Activated CD8-positive, alpha-beta memory T cell treated with anti-CD3 and anti-CD28 coated beads, Interleukin-2, amount 10 ng/mL, durations not matched to agents 7 days and 5 days (primary cell): ENCODE measurements at regions of chr15 and their contacts with region 1.

Region 1: GRCh38 chr15:74787251-74788041 is 5.6 kb downstream of the CSK start:
- DNase-seq: peak; percentile 99
- ATAC-seq: peak; percentile 67
- H3K4me3 Mint-ChIP-seq: peak overlapping the region; percentile 79
- H3K27ac Mint-ChIP-seq: peak overlapping the region; percentile 98
- H3K4me1 Mint-ChIP-seq: peaks cover 67% of the 10 kb centered on the region
- H3K27me3 Mint-ChIP-seq: no peaks in the 10 kb centered on the region

Region 2: GRCh38 chr15:74799856-74800547 is 12.6 kb after region 1 on chr15:
- CTCF ChIA-PET with region 1: interaction called, 1,355 read pairs
- DNase-seq: peak; percentile 90
- ATAC-seq: peak; percentile 91
- H3K4me3 Mint-ChIP-seq: no peak overlapping the region
- H3K27ac Mint-ChIP-seq: peak overlapping the region; percentile 74
- H3K4me1 Mint-ChIP-seq: peaks cover 54% of the 10 kb centered on the region
- H3K27me3 Mint-ChIP-seq: no peaks in the 10 kb centered on the region

Region 3: GRCh38 chr15:74808073-74808755 is 20.8 kb after region 1 on chr15:
- CTCF ChIA-PET with region 1: interaction called, 11 read pairs
- DNase-seq: no peak
- ATAC-seq: no peak
- H3K4me3 Mint-ChIP-seq: no peak overlapping the region
- H3K27ac Mint-ChIP-seq: no peak overlapping the region
- H3K4me1 Mint-ChIP-seq: peaks cover 18% of the 10 kb centered on the region
- H3K27me3 Mint-ChIP-seq: peaks cover 2% of the 10 kb centered on the region

Region 4: DNA sequence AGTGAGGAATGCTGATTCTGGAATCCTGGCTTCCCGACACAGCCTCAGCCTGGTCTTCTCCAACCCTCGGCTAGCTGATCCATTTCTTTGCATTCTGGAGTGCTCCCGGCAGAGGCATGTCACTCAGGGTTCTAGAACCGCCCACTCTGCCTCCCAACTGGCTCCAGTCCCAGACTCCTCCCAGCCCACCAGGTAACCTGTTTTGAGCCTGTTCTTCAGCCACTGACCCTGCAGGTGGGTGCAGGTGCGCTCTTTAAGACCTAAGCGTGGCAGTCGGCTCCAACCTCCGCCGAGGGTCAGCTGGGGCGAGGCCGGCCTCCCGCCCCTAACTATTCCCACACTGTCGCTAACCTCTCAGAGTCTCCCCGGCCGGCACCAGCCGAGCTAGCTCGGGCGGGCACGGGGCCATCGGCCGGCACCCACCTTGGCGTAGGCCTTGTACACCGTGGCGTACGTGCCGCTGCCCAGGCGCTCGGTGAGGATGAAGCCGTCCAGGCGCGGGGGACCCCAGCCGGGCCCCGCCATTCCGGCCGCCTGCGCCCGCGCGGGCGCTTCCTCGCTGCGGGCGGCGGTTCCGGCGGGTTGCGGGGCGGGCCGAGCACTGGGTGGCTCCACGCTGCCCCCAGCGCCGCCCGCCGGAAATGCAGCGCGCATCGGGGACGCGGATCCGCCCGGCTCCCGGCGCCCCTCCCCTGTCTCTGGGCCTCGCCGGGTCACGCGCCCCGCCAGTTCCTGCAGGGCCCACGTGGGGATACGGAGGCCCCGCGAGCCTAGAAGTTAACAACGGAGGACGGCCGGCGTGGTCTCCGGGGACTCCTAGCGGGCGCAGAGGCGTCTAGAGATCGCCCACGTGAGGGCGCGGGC is 55.4 kb after region 1 on chr15 and contains the start of gene ULK3:
- CTCF ChIA-PET with region 1: interaction called, 14 read pairs
- DNase-seq: peak; percentile 95
- ATAC-seq: peak; percentile 87
- H3K4me3 Mint-ChIP-seq: peak within 1 kb of the TSS; percentile 87
- H3K27ac Mint-ChIP-seq: peak within 1 kb of the TSS; percentile 93
- H3K4me1 Mint-ChIP-seq: peaks cover 47% of the 10 kb centered on the region
- H3K27me3 Mint-ChIP-seq: no peaks in the 10 kb centered on the region
- total RNA-seq, gene ULK3: 48.5 to 58.6 TPM